Ovary (tissue), 10 donors: ENCODE measurements at regions of chr12 and their contacts with region 1.

Region 1: GRCh38 chr12:116818948-116819832 is 62.1 kb downstream of the HRK start:
- DNase-seq: peak; percentile 91 to 94 (median 93)
- H3K4me3 ChIP-seq: peak overlapping the region; percentile 80
- H3K27ac ChIP-seq: peak overlapping the region; percentile 68 to 92
- H3K4me1 ChIP-seq: peaks cover 4% of the 10 kb centered on the region
- H3K27me3 ChIP-seq: no peaks in the 10 kb centered on the region
- CTCF ChIP-seq: peak in 2 of 3 donors; percentile 16 to 32
- EP300 ChIP-seq: peak; percentile 15
- POLR2A ChIP-seq: peak; percentile 77

Region 2: DNA sequence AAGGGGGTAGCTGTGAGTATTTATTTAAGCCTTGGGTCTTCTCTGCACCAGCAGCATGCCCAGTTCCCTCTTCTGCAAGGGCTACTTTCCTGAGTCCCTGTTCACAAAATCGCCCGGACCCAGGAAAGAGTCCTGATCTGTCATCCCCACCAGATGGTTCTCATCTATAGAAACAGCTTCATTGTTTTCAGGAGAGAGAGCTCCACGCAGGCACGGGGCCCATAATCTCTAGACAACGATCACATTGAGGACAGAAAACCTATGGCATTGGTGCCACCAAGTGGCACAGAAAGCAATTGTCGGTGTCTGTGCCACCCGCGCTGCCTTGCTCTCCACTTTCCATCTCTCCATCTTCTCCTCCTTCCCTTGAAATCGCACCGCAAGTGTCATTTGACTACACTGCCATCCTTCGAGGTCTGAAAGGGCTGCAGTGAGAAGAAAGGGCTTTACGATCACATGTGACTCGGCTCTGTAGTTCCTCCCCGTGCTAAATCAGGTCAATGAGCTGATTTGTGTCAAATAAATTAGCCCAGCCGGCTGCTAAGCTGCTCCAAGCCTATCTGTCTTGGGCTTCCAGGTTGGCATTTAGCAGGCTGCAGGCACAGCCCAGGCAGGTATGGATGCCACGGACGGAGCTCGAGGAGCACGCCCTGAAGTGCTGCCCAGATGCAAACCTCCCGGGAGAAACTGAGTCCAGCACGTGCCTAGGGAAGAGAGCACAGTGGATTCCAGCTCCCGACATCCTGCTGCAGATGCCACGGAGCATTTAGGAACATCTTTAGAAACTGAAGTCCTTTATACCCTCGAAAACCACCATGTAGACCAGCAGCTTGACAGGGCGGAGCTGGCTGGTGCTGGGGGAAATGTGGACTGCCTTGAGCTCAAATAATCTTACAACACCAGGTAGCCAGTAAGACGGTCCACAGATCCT is 110.1 kb before region 1 on chr12:
- intact Hi-C with region 1: no loop called
- DNase-seq: peak; percentile 44 to 70 (median 64)
- H3K4me3 ChIP-seq: no peak overlapping the region
- H3K27ac ChIP-seq: no peak overlapping the region
- H3K4me1 ChIP-seq: peaks cover 6% of the 10 kb centered on the region
- H3K27me3 ChIP-seq: no peaks in the 10 kb centered on the region
- CTCF ChIP-seq: peak in 1 of 3 donors; percentile 36
- EP300 ChIP-seq: no peak
- POLR2A ChIP-seq: no peak

Region 3: DNA sequence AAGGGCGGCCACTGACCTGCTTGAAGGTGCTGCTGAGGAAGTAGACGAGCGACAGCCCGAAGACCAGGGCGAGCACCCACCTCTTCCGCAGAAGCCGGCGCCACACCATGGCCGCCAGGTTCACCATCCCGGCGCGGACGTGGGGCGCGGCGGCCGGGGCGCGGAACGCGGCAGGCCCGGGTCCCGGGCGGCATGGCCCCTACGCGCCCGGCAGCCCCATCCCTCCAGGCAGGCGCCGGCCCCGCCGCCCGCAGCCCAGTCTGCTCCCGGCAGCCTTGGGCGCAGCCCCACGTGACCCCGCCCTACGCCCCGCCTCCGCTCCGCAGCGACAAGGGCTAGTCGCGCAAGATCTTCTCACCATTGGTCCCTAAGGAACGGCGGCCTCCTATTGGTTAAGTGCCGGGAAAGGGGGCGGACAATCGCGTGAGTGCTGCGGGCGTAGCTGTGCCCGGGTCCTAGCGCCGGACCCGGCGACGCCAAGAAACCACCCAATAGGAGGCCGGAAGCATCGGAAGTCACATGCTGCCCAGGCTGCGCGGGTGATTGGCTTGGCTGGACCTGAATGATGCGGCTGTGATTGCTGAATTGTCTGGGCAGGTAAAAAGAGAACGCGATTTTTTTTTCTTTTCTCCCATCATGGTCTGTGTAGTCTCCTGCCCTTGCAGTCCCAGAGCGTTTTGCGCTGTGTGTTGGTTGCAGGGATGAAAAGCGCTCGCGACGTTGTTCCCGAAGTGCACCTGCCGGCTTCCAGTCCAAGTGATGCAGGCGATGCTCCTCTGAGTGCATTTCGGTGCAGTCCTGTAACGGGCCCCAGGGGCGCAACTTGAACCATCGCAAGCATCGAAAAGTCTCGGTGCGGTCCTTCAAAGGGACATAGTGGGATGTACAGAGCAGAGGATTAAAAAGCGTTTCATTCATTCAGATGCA is 81.2 kb before region 1 on chr12 and contains the starts of genes RNFT2 and SPRING1:
- intact Hi-C with region 1: loop called in 1 of 4 experiments (anchors 2 kb)
- DNase-seq: peak; percentile 98 to 99 (median 99)
- H3K4me3 ChIP-seq: peak within 1 kb of the TSS; percentile 70
- H3K27ac ChIP-seq: no peak within 1 kb of the TSS
- H3K4me1 ChIP-seq: peaks cover 3% of the 10 kb centered on the region
- H3K27me3 ChIP-seq: no peaks in the 10 kb centered on the region
- CTCF ChIP-seq: no peak
- EP300 ChIP-seq: no peak
- POLR2A ChIP-seq: peak; percentile 74
- total RNA-seq, gene RNFT2: 0.72 to 4.3 (median 2.8) TPM
- total RNA-seq, gene SPRING1: 11.0 to 19.7 (median 12.3) TPM

Region 4: GRCh38 chr12:117809509-117809908 is 990.3 kb after region 1 on chr12:
- intact Hi-C with region 1: no loop called
- DNase-seq: no peak
- H3K4me3 ChIP-seq: no peak overlapping the region
- H3K27ac ChIP-seq: no peak overlapping the region
- H3K4me1 ChIP-seq: no peaks in the 10 kb centered on the region
- H3K27me3 ChIP-seq: no peaks in the 10 kb centered on the region
- CTCF ChIP-seq: no peak
- EP300 ChIP-seq: no peak
- POLR2A ChIP-seq: no peak